ENCODE measurements at regions of chr5 and their contacts with region 1.

Region 1: GRCh38 chr5:57494104-57495098 is 11.8 kb upstream of the ACTBL2 start:
- DNase-seq: peak; percentile 90 to 93
- H3K4me3 ChIP-seq: peak overlapping the region; percentile 28; the same call in 1 of the 2 replicates
- H3K27ac ChIP-seq: peak overlapping the region; percentile 95
- H3K4me1 ChIP-seq: peaks cover 44% of the 10 kb centered on the region
- H3K27me3 ChIP-seq: no peaks in the 10 kb centered on the region
- CTCF ChIP-seq: no peak

Region 2: DNA sequence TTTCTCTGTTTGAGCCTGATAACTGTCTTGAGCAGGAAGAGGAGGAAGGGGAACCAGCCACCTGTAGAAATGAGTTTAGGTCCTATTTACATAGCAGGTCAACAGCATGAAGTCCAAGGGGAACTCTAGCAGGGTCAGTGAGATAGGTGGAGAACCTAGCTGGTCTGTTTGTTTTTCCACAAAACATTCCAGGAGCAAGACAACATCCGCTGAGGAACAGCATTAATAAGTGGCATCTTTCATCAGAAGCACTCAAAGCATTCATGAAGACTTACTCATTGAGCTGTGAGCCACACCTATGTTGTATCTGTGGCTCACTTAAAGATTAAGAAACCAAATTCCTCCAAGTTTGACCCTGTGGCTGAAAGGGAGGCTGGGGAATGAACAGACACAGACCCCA is 127.7 kb before region 1 on chr5:
- CTCF ChIA-PET with region 1: no interaction called
- POLR2A ChIA-PET with region 1: no interaction called
- intact Hi-C with region 1: loop called (anchors 2 kb)
- DNase-seq: peak; percentile 55 to 98
- H3K4me3 ChIP-seq: no peak overlapping the region
- H3K27ac ChIP-seq: peak overlapping the region; percentile 92
- H3K4me1 ChIP-seq: peaks cover 58% of the 10 kb centered on the region
- H3K27me3 ChIP-seq: no peaks in the 10 kb centered on the region
- CTCF ChIP-seq: no peak

Region 3: DNA sequence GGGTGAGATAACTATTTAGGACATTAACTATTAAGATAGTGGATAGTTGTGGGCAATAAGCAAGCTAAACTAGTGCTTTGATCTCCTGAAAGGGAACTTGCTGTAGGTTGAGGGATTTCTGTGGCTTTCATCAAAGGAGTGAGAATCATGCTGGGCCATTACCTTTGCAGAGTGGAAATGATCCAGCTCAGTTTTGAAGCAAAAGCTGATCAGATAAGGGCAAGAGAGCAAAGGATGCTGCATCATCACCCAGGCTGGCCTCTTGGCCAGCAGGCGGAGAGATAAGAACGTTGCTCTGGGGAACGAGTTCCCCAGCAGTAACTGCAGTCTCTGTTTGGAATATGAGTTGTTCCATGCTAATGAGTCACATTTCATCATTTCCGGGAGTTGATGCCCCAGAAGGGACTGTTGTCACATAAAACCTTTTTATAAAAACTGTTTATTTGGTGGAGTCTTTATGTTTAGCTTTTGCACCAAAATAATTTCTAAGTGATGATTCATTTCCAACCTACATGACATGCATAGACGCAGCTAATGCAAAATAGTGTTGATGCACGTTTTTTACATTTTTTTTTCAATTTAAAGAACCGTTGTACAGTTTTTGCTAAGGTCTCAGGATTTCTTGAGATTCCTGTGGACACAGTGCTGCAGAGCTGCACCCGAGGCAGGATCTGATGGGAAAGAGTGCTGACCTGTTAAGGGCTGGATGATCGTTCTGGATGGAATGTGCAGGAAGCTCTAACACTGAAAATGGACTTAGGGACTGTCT is 111.1 kb before region 1 on chr5:
- CTCF ChIA-PET with region 1: no interaction called
- POLR2A ChIA-PET with region 1: no interaction called
- intact Hi-C with region 1: loop called (anchors 1 kb)
- DNase-seq: peak; percentile 62 to 89
- H3K4me3 ChIP-seq: no peak overlapping the region; the same call in 1 of the 2 replicates
- H3K27ac ChIP-seq: peak overlapping the region; percentile 84
- H3K4me1 ChIP-seq: peaks cover 30% of the 10 kb centered on the region
- H3K27me3 ChIP-seq: no peaks in the 10 kb centered on the region
- CTCF ChIP-seq: no peak

Region 4: GRCh38 chr5:57435701-57436134 is 58.7 kb before region 1 on chr5:
- CTCF ChIA-PET with region 1: no interaction called
- POLR2A ChIA-PET with region 1: interaction called, 13 read pairs
- intact Hi-C with region 1: loop called (anchors 1 kb)
- DNase-seq: peak; percentile 58 to 99
- H3K4me3 ChIP-seq: no peak overlapping the region
- H3K27ac ChIP-seq: peak overlapping the region; percentile 99
- H3K4me1 ChIP-seq: peaks cover 42% of the 10 kb centered on the region
- H3K27me3 ChIP-seq: no peaks in the 10 kb centered on the region
- CTCF ChIP-seq: no peak

Region 5: GRCh38 chr5:57442080-57442839 is 52.1 kb before region 1 on chr5:
- CTCF ChIA-PET with region 1: no interaction called
- POLR2A ChIA-PET with region 1: interaction called, 10 read pairs
- intact Hi-C with region 1: loop called (anchors 1 kb)
- DNase-seq: no peak
- H3K4me3 ChIP-seq: no peak overlapping the region
- H3K27ac ChIP-seq: peak overlapping the region; percentile 82
- H3K4me1 ChIP-seq: peaks cover 29% of the 10 kb centered on the region
- H3K27me3 ChIP-seq: no peaks in the 10 kb centered on the region
- CTCF ChIP-seq: no peak

Region 6: DNA sequence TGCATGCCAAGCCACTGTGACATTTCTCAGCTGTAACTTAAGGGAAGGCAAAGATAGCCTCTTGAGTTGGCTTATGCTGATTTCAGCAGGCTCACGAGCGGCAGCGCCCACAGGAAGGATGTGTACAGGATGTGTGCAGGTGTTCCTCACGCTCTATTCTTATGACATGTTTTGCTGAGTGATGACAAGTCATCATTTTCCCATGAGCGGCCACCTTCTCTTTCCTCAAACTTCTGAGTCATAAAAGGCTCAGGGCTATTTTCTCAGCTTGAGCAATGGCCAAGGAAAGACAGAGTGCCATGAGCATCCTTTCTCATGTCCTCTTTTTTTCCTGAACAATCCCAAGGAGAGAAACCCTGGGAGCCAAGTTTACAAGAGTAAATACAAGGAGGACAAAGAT is 599.6 kb after region 1 on chr5:
- CTCF ChIA-PET with region 1: no interaction called
- POLR2A ChIA-PET with region 1: no interaction called
- intact Hi-C with region 1: loop called (anchors 1 kb)
- DNase-seq: peak; percentile 72 to 96
- H3K4me3 ChIP-seq: no peak overlapping the region
- H3K27ac ChIP-seq: peak overlapping the region; percentile 92
- H3K4me1 ChIP-seq: peaks cover 25% of the 10 kb centered on the region
- H3K27me3 ChIP-seq: no peaks in the 10 kb centered on the region
- CTCF ChIP-seq: no peak